Heart left ventricle (tissue), 16 donors: ENCODE measurements at regions of chr4 and their contacts with region 1.

Region 1: GRCh38 chr4:107863850-107864371 is 39.2 kb downstream of the SGMS2 start:
- DNase-seq: peak; percentile 38 to 76 (median 66)
- ATAC-seq: peak; percentile 94 to 96 (median 94)
- H3K4me3 ChIP-seq: no peak overlapping the region
- H3K27ac ChIP-seq: peak overlapping the region in 11 of 12 donors; percentile 3 to 76 (median 32)
- H3K4me1 ChIP-seq: peaks cover 0 to 31% (median 14%) of the 10 kb centered on the region in 12 donors
- H3K27me3 ChIP-seq: no peaks in the 10 kb centered on the region
- CTCF ChIP-seq: peak in 1 of 12 donors; percentile 7
- POLR2A ChIP-seq: no peak

Region 2: GRCh38 chr4:107896158-107897045 is 32.5 kb after region 1 on chr4:
- intact Hi-C with region 1: loop called in 2 of 10 experiments (anchors 5 kb)
- DNase-seq: no peak
- ATAC-seq: peak in 3 of 4 donors; percentile 62 to 81 (median 71)
- H3K4me3 ChIP-seq: no peak overlapping the region
- H3K27ac ChIP-seq: peak overlapping the region in 2 of 12 donors; percentile 21 to 60
- H3K4me1 ChIP-seq: peaks cover 0 to 24% (median 8%) of the 10 kb centered on the region in 12 donors
- H3K27me3 ChIP-seq: no peaks in the 10 kb centered on the region
- CTCF ChIP-seq: no peak
- POLR2A ChIP-seq: no peak